ENCODE measurements at regions of chr12 and their contacts with region 1.

Region 1: GRCh38 chr12:85866986-85867776 is 6.9 kb upstream of the NTS start:
- DNase-seq: no peak
- ATAC-seq: peak; percentile 88
- H3K4me3 ChIP-seq: no peak overlapping the region
- H3K27ac ChIP-seq: no peak overlapping the region
- H3K4me1 ChIP-seq: peaks cover 5% of the 10 kb centered on the region
- H3K27me3 ChIP-seq: no peaks in the 10 kb centered on the region
- CTCF ChIP-seq: peak; percentile 81

Region 2: GRCh38 chr12:84785951-84786350 is 1081.2 kb before region 1 on chr12:
- intact Hi-C with region 1: no loop called
- DNase-seq: no peak
- ATAC-seq: no peak
- H3K4me3 ChIP-seq: no peak overlapping the region
- H3K27ac ChIP-seq: no peak overlapping the region
- H3K4me1 ChIP-seq: no peaks in the 10 kb centered on the region
- H3K27me3 ChIP-seq: no peaks in the 10 kb centered on the region
- CTCF ChIP-seq: no peak

Region 3: GRCh38 chr12:85476756-85477155 is 390.4 kb before region 1 on chr12:
- intact Hi-C with region 1: loop called (anchors 10 kb)
- DNase-seq: no peak
- ATAC-seq: no peak
- H3K4me3 ChIP-seq: no peak overlapping the region
- H3K27ac ChIP-seq: no peak overlapping the region
- H3K4me1 ChIP-seq: no peaks in the 10 kb centered on the region
- H3K27me3 ChIP-seq: no peaks in the 10 kb centered on the region
- CTCF ChIP-seq: no peak

Region 4: GRCh38 chr12:85568395-85569103 is 298.6 kb before region 1 on chr12:
- intact Hi-C with region 1: loop called (anchors 10 kb)
- DNase-seq: no peak
- ATAC-seq: peak; percentile 25
- H3K4me3 ChIP-seq: no peak overlapping the region
- H3K27ac ChIP-seq: no peak overlapping the region
- H3K4me1 ChIP-seq: no peaks in the 10 kb centered on the region
- H3K27me3 ChIP-seq: no peaks in the 10 kb centered on the region
- CTCF ChIP-seq: no peak

Region 5: GRCh38 chr12:85920324-85920947 is 53.3 kb after region 1 on chr12:
- intact Hi-C with region 1: no loop called
- DNase-seq: no peak
- ATAC-seq: no peak
- H3K4me3 ChIP-seq: no peak overlapping the region
- H3K27ac ChIP-seq: no peak overlapping the region
- H3K4me1 ChIP-seq: no peaks in the 10 kb centered on the region
- H3K27me3 ChIP-seq: no peaks in the 10 kb centered on the region
- CTCF ChIP-seq: peak; percentile 73

Region 6: DNA sequence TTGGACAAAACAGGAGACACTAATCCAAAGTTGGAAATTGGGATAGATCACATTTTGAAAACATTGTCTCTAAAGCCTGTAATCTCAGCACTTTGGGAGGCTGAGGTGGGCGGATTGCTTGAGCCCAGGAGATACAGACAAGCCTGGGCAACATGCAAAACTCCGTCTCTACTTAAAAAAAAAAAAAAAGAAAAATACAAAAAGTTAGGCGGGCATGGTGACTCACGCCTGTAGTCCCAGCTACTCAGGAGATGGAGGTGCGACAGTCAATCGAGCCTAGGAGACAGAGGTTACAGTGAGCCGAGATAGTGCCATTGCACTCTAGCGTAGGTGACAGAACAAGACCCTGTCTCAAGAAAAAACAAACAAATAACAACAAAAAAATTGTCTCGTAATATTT is 236.9 kb after region 1 on chr12:
- intact Hi-C with region 1: no loop called
- DNase-seq: no peak
- ATAC-seq: no peak
- H3K4me3 ChIP-seq: no peak overlapping the region
- H3K27ac ChIP-seq: no peak overlapping the region
- H3K4me1 ChIP-seq: no peaks in the 10 kb centered on the region
- H3K27me3 ChIP-seq: no peaks in the 10 kb centered on the region
- CTCF ChIP-seq: no peak

Region 7: DNA sequence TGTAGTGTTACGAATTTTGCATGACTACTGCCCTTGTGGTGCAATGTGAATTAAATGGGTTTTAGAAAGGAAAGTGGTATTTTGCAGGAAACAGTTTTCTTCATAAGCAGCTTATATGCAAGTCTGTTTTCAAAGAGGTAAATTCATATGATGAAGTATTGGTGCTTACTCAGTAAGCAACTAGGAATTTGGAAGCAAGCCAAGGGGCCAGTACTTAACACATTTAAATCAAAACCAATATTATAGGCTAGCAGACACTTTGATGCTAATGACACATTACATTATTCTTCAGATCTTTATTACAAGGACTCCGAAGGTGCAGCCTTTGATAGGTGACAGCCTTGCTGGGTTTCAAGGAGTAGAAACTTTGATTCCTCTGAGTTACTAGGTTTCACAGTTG is 365.9 kb after region 1 on chr12:
- intact Hi-C with region 1: no loop called
- DNase-seq: no peak
- ATAC-seq: no peak
- H3K4me3 ChIP-seq: no peak overlapping the region
- H3K27ac ChIP-seq: no peak overlapping the region
- H3K4me1 ChIP-seq: no peaks in the 10 kb centered on the region
- H3K27me3 ChIP-seq: no peaks in the 10 kb centered on the region
- CTCF ChIP-seq: no peak